GM23248 (cell line): ENCODE measurements at regions of chr20 and their contacts with region 1.

Region 1: DNA sequence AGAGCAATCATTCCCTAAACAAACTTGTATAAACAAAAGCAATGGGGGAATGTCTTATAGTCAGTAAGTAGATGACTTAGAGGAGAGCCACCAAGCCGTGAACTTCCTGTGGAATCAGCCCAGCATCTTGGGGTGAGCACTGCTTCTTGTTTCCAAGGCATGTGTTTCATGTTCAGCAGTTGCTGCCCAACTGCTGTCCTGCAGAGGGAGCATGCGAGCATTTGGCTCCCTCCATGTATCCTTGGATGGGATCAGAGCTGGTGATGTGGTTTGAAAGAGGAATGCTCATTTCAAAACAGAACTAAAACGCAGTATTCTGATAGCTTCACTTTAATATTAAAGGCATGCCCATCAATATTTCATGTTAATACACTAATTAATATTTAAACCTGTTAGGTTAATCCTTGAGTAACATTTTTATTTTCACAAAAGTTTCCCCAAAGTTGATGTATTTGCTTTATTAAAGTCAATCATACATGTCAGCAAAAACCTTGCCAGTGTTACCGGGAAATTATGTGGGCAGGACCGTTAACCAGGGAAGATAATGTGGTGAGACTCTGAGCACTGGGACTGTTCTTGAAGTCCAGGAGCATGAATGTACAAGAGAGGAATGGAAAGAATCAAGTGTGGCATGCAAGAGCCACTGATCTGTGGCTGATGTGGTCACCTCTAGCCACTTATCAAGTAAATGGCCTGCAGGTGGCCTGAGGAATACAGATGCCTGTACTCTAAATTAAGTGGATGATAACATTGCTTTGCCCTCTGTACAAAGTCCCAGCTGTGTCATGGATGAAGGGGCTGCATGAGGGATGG is 172.2 kb upstream of the GGTLC1 start:
- DNase-seq: peak; percentile 82
- H3K4me3 ChIP-seq: no peak overlapping the region
- H3K27ac ChIP-seq: no peak overlapping the region
- H3K4me1 ChIP-seq: 0 out of 2 replicates have a peak, but pooled peaks cover 6% of the 10 kb centered on the region
- H3K27me3 ChIP-seq: no peaks in the 10 kb centered on the region

Region 2: GRCh38 chr20:23776067-23776771 is 384.6 kb before region 1 on chr20:
- in situ Hi-C with region 1: no loop called
- DNase-seq: no peak
- H3K4me3 ChIP-seq: no peak overlapping the region
- H3K27ac ChIP-seq: no peak overlapping the region
- H3K4me1 ChIP-seq: no peaks in the 10 kb centered on the region
- H3K27me3 ChIP-seq: 0 out of 2 replicates have a peak, but pooled peaks cover 6% of the 10 kb centered on the region

Region 3: DNA sequence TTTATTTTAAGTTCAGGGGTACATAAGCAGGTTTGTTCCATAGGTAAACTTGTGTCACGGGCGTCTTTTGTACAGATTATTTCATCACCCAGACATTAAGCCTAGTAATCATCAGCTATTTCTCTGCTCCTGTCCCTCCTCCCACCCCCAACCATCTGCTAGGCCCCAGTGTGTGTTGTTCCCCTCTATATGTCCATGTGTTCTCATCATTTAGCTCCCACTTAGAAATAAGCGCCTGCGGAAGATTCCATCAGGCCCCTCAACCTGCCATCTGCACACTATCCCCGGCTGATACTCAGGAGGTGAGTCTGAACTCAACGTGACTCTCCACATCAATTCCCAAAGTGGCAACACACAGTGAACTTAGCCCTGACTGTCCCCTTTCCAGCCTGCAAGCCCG is 80.7 kb after region 1 on chr20:
- in situ Hi-C with region 1: no loop called
- DNase-seq: no peak
- H3K4me3 ChIP-seq: no peak overlapping the region
- H3K27ac ChIP-seq: no peak overlapping the region
- H3K4me1 ChIP-seq: no peaks in the 10 kb centered on the region
- H3K27me3 ChIP-seq: no peaks in the 10 kb centered on the region; the same call in 1 of the 2 replicates

Region 4: GRCh38 chr20:24257171-24257570 is 96.4 kb after region 1 on chr20:
- in situ Hi-C with region 1: no loop called
- DNase-seq: peak; percentile 9
- H3K4me3 ChIP-seq: no peak overlapping the region
- H3K27ac ChIP-seq: no peak overlapping the region
- H3K4me1 ChIP-seq: no peaks in the 10 kb centered on the region
- H3K27me3 ChIP-seq: 0 out of 2 replicates have a peak, but pooled peaks cover 10% of the 10 kb centered on the region

Region 5: GRCh38 chr20:24781422-24781980 is 620.7 kb after region 1 on chr20:
- in situ Hi-C with region 1: loop called (anchors 25 kb)
- DNase-seq: peak; percentile 77
- H3K4me3 ChIP-seq: no peak overlapping the region
- H3K27ac ChIP-seq: no peak overlapping the region
- H3K4me1 ChIP-seq: no peaks in the 10 kb centered on the region
- H3K27me3 ChIP-seq: peaks cover 14% of the 10 kb centered on the region; the same call in 1 of the 2 replicates

Region 6: DNA sequence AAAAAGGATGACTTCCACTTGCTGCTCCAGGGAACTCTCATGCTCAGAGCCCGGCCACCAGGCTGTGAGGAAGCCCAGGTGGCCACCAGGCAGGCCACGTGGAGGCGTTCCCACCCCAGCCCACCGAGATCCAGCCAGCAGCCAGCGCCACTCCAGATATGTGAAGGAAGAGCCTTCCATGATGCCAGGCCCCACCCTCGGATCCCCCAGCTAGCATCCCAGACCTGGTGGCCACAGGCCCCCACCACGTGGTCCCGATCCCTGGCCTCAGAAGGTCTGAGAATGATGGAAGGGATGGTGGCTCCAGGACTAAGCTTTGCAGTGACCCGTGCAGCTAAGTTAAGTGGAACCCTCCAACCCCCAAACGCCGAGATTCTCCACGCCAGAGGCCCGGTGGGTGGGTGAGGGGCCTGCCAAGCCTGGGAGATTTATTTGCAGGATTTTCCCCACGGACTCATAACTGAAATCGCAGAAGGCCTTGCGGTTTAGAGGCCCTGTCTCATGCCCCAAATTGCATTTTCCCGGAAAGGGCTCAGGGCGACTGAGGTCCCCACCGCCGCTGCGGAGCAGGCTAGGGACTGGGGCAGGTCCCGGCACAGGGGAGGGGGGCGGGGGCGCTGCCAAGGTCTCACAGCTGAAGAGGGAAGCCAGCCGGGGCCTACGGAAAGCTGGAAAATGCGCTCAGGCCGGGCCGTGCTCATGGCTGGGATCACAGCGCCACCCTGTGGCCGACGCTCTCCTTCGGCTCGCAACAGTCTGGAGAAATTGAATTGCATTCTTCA is 757.2 kb after region 1 on chr20:
- in situ Hi-C with region 1: loop called (anchors 10 kb)
- DNase-seq: peak; percentile 78
- H3K4me3 ChIP-seq: no peak overlapping the region
- H3K27ac ChIP-seq: no peak overlapping the region
- H3K4me1 ChIP-seq: no peaks in the 10 kb centered on the region
- H3K27me3 ChIP-seq: peaks cover 16% of the 10 kb centered on the region

Region 7: GRCh38 chr20:25725639-25726038 is 1564.9 kb after region 1 on chr20:
- in situ Hi-C with region 1: no loop called
- DNase-seq: no peak
- H3K4me3 ChIP-seq: no peak overlapping the region
- H3K27ac ChIP-seq: no peak overlapping the region
- H3K4me1 ChIP-seq: no peaks in the 10 kb centered on the region
- H3K27me3 ChIP-seq: no peaks in the 10 kb centered on the region